H1 (cell line): ENCODE measurements at regions of chr12 and their contacts with region 1.

Region 1: GRCh38 chr12:66235626-66236281 is 46.7 kb downstream of the IRAK3 start:
- DNase-seq: no peak
- H3K4me3 ChIP-seq: peak overlapping the region; percentile 30 to 67 (median 58); a peak in 7 of 8 replicates
- H3K27ac ChIP-seq: no peak overlapping the region
- H3K4me1 ChIP-seq: peaks cover 0 to 11% (median 5%) of the 10 kb centered on the region in 4 experiments; a peak in 4 of 7 replicates
- H3K27me3 ChIP-seq: no peaks in the 10 kb centered on the region
- CTCF ChIP-seq: no peak
- EP300 ChIP-seq: no peak
- POLR2A ChIP-seq: no peak
- RAD21 ChIP-seq: no peak

Region 2: GRCh38 chr12:66156654-66157053 is 79.1 kb before region 1 on chr12:
- CTCF ChIA-PET with region 1: no interaction called
- POLR2A ChIA-PET with region 1: no interaction called
- DNase-seq: no peak
- H3K4me3 ChIP-seq: no peak overlapping the region
- H3K27ac ChIP-seq: no peak overlapping the region
- H3K4me1 ChIP-seq: no peaks in the 10 kb centered on the region
- H3K27me3 ChIP-seq: no peaks in the 10 kb centered on the region
- CTCF ChIP-seq: no peak
- EP300 ChIP-seq: no peak
- POLR2A ChIP-seq: no peak
- RAD21 ChIP-seq: no peak

Region 3: DNA sequence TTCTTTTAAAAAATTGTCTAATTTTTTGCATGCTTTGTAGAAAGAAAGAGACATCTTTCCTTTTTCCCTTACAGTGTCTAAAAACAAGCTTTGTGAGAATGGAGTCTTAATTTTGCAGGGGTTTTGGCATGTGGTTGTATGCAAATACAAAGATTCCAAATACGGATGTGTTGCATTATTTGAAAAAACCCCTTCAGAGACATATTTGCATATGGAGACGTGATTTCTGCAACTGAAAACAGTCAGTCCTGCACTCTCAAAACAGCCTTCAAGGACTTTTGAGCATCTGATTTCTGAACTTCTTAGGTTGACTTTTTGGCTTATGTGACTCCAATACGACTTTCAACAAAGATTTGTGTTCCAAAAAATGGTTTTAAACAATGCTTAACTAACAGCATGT is 38.9 kb before region 1 on chr12:
- CTCF ChIA-PET with region 1: no interaction called
- POLR2A ChIA-PET with region 1: no interaction called
- DNase-seq: no peak
- H3K4me3 ChIP-seq: no peak overlapping the region
- H3K27ac ChIP-seq: no peak overlapping the region
- H3K4me1 ChIP-seq: peaks cover 0 to 5% (median 3%) of the 10 kb centered on the region in 4 experiments; a peak in 3 of 7 replicates
- H3K27me3 ChIP-seq: peaks cover 0 to 1% (median 0%) of the 10 kb centered on the region in 4 experiments; a peak in 1 of 7 replicates
- CTCF ChIP-seq: no peak
- EP300 ChIP-seq: no peak
- POLR2A ChIP-seq: no peak
- RAD21 ChIP-seq: no peak

Region 4: GRCh38 chr12:66217342-66217917 is 18.3 kb before region 1 on chr12:
- CTCF ChIA-PET with region 1: no interaction called
- POLR2A ChIA-PET with region 1: no interaction called
- DNase-seq: no peak
- H3K4me3 ChIP-seq: no peak overlapping the region
- H3K27ac ChIP-seq: no peak overlapping the region
- H3K4me1 ChIP-seq: no peaks in the 10 kb centered on the region
- H3K27me3 ChIP-seq: no peaks in the 10 kb centered on the region
- CTCF ChIP-seq: no peak
- EP300 ChIP-seq: no peak
- POLR2A ChIP-seq: no peak
- RAD21 ChIP-seq: no peak

Region 5: GRCh38 chr12:66247741-66248140 is 12.0 kb after region 1 on chr12:
- CTCF ChIA-PET with region 1: interaction called, 14 read pairs
- POLR2A ChIA-PET with region 1: interaction called, 6 read pairs
- DNase-seq: no peak
- H3K4me3 ChIP-seq: no peak overlapping the region
- H3K27ac ChIP-seq: no peak overlapping the region
- H3K4me1 ChIP-seq: no peaks in the 10 kb centered on the region
- H3K27me3 ChIP-seq: no peaks in the 10 kb centered on the region
- CTCF ChIP-seq: no peak
- EP300 ChIP-seq: no peak
- POLR2A ChIP-seq: no peak
- RAD21 ChIP-seq: no peak